Naive thymus-derived CD4-positive, alpha-beta T cell (primary cell): ENCODE measurements at regions of chr17 and their contacts with region 1.

Region 1: GRCh38 chr17:7561028-7561575 is 617 bp upstream of the SENP3 start:
- DNase-seq: peak; percentile 60 to 86 (median 71)
- ATAC-seq: peak; percentile 76
- H3K4me3 ChIP-seq: peak overlapping the region; percentile 96
- H3K4me3 Mint-ChIP-seq: peak overlapping the region; percentile 87 to 97 (median 93)
- H3K27ac ChIP-seq: peak overlapping the region; percentile 92
- H3K27ac Mint-ChIP-seq: peak overlapping the region; percentile 90 to 100 (median 96)
- H3K4me1 ChIP-seq: peaks cover 17 to 54% of the 10 kb centered on the region in 2 donors
- H3K4me1 Mint-ChIP-seq: peaks cover 33 to 55% (median 49%) of the 10 kb centered on the region in 7 donors
- H3K27me3 ChIP-seq: no peaks in the 10 kb centered on the region
- H3K27me3 Mint-ChIP-seq: peaks cover 0 to 2% (median 0%) of the 10 kb centered on the region in 5 donors

Region 2: DNA sequence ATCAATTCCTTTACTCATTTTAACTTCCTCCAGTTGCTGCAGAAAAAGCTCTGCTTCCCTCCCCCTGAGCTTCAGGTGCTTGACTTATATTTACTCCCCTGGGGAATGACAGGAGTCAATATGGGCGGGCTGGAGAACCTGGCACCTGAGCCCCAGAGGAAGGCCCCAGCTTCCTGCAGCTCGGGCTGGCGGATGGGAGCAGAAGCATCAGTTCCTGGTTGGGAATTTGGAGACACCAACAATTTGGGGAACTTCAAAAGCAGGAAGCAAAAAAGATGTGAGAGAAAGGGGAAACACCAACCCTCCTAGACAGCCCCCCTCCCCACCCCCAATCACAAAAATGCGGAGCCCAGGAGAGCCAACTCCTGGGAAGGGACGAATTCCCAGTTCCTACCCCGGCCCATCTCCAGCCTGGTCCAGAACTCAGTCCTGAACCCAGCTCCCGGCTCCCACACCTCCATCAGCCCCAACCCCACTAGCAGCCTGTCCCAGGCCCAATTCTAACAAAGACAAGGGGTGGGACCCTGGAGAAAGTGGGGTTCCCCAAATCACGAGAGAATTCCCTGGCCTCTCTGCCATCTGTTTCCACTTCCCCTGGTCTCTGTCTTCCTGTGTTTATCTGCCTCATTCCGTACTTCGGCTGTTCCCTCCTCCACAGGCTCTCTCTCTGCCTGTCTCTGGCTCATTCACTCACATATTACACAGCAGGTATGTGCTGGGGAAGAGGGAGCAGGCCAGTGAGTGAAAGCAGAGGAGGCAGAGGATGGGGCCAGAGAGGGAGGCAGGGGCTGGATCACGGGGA is 430.3 kb before region 1 on chr17:
- CTCF ChIA-PET with region 1: no interaction called
- POLR2A ChIA-PET with region 1: no interaction called
- intact Hi-C with region 1: no loop called
- DNase-seq: no peak
- ATAC-seq: no peak
- H3K4me3 ChIP-seq: no peak overlapping the region
- H3K4me3 Mint-ChIP-seq: peak overlapping the region in 6 of 10 donors; percentile 11 to 73 (median 30)
- H3K27ac ChIP-seq: peak overlapping the region; percentile 11
- H3K27ac Mint-ChIP-seq: peak overlapping the region; percentile 31 to 98 (median 90)
- H3K4me1 ChIP-seq: peaks cover 6 to 17% of the 10 kb centered on the region in 2 donors
- H3K4me1 Mint-ChIP-seq: peaks cover 18 to 33% (median 24%) of the 10 kb centered on the region in 7 donors
- H3K27me3 ChIP-seq: no peaks in the 10 kb centered on the region
- H3K27me3 Mint-ChIP-seq: peaks cover 0 to 5% (median 0%) of the 10 kb centered on the region in 5 donors

Region 3: DNA sequence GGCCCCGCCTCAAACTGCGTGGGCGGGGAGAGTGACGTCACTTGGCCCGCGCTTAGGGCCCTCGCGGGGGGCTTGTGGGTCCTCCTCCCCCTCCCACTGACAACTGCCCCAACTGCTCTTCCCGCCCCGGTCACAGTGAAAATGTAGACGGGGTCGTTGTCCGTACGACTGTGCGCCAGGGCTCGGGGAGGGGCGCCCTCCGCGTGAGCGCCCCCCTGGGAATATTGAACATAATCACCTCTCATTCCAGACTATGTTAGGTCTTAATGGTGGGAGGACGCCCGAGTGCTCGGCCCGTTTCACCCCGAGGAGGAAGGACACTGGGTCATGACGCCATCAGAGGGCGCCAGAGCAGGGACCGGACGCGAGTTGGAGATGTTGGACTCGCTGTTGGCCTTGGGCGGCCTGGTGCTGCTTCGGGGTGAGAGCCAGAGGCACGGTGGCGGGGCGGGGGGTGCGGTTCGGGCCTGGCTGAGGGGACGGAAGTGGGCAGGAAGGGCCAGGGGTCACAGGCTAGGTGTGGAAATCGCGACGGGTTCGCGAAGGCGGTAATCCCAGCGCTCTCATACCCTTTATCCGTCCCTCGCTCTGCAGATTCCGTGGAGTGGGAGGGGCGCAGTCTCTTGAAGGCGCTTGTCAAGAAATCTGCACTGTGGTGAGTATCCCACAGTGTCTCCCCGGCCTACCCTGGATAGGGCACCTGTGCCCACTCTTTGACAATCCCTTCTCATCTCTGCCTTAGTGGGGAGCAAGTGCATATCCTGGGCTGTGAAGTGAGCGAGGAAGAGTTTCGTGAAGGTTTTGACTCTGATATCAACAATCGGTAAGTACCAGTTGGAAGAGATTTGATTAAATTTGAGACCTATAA is 308.7 kb before region 1 on chr17 and contains the start of gene ELP5:
- CTCF ChIA-PET with region 1: no interaction called
- POLR2A ChIA-PET with region 1: no interaction called
- intact Hi-C with region 1: loop called (anchors 1 kb)
- DNase-seq: peak in 5 of 9 donors; percentile 73 to 90 (median 83)
- ATAC-seq: peak; percentile 69
- H3K4me3 ChIP-seq: peak within 1 kb of the TSS; percentile 91
- H3K4me3 Mint-ChIP-seq: peak within 1 kb of the TSS; percentile 85 to 98 (median 96)
- H3K27ac ChIP-seq: peak within 1 kb of the TSS; percentile 94
- H3K27ac Mint-ChIP-seq: peak within 1 kb of the TSS; percentile 95 to 100 (median 99)
- H3K4me1 ChIP-seq: peaks cover 22 to 32% of the 10 kb centered on the region in 2 donors
- H3K4me1 Mint-ChIP-seq: peaks cover 29 to 51% (median 42%) of the 10 kb centered on the region in 7 donors
- H3K27me3 ChIP-seq: no peaks in the 10 kb centered on the region
- H3K27me3 Mint-ChIP-seq: peaks cover 0 to 4% (median 0%) of the 10 kb centered on the region in 5 donors
- total RNA-seq, gene ELP5: 26.9 to 49.1 (median 32.9) TPM

Region 4: DNA sequence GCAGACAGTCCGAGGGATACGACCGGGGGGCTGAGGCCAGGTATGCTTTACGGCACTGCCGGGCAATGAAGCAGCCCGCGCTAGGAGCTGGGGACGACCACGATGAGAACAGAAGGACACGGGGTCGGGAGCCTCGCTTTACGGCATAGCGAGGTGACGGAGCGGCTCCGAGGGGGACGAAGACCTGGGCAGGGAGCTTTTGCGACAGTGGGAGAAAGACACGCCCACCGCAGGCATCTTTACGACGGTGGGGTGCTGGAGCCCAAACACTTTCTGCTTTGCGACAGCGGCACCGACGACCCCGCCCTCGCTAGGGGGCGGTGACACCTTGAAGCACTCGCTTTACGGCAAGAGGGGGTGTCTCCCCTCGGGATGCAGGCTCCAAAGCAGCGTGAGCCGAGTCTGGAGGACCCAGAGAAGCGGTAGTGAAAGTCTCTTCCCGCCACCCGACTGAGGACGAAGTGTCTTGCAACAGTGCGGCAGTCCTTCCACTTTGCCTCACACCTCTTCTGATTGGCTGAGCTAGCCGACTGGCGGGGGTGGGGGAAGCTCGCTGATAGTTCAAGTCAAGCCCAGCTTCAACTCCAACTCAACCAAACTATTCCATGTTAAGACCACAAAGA is 231.6 kb before region 1 on chr17:
- CTCF ChIA-PET with region 1: no interaction called
- POLR2A ChIA-PET with region 1: no interaction called
- intact Hi-C with region 1: loop called in 1 of 2 experiments (anchors 1 kb)
- DNase-seq: peak; percentile 84 to 98 (median 98)
- ATAC-seq: peak; percentile 91
- H3K4me3 ChIP-seq: peak overlapping the region; percentile 95
- H3K4me3 Mint-ChIP-seq: peak overlapping the region; percentile 89 to 100 (median 96)
- H3K27ac ChIP-seq: peak overlapping the region; percentile 88
- H3K27ac Mint-ChIP-seq: peak overlapping the region; percentile 93 to 99 (median 97)
- H3K4me1 ChIP-seq: peaks cover 15 to 36% of the 10 kb centered on the region in 2 donors
- H3K4me1 Mint-ChIP-seq: peaks cover 29 to 61% (median 44%) of the 10 kb centered on the region in 7 donors
- H3K27me3 ChIP-seq: no peaks in the 10 kb centered on the region
- H3K27me3 Mint-ChIP-seq: no peaks in the 10 kb centered on the region

Region 5: GRCh38 chr17:7403977-7404736 is 156.9 kb before region 1 on chr17 and contains the start of gene TMEM256:
- CTCF ChIA-PET with region 1: interaction called, 3 read pairs
- POLR2A ChIA-PET with region 1: interaction called, 3 read pairs
- intact Hi-C with region 1: loop called in 1 of 2 experiments (anchors 1 kb)
- DNase-seq: peak; percentile 79 to 96 (median 91)
- ATAC-seq: peak; percentile 93
- H3K4me3 ChIP-seq: peak within 1 kb of the TSS; percentile 95
- H3K4me3 Mint-ChIP-seq: peak within 1 kb of the TSS; percentile 87 to 98 (median 96)
- H3K27ac ChIP-seq: peak within 1 kb of the TSS; percentile 78
- H3K27ac Mint-ChIP-seq: peak within 1 kb of the TSS; percentile 91 to 100 (median 96)
- H3K4me1 ChIP-seq: peaks cover 9 to 10% of the 10 kb centered on the region in 2 donors
- H3K4me1 Mint-ChIP-seq: peaks cover 8 to 25% (median 21%) of the 10 kb centered on the region in 7 donors
- H3K27me3 ChIP-seq: no peaks in the 10 kb centered on the region
- H3K27me3 Mint-ChIP-seq: peaks cover 0 to 23% (median 0%) of the 10 kb centered on the region in 5 donors
- total RNA-seq, gene TMEM256: 31.5 to 58.5 (median 48.2) TPM

Region 6: GRCh38 chr17:7515911-7516610 is 45.0 kb before region 1 on chr17:
- CTCF ChIA-PET with region 1: interaction called, 86 read pairs
- POLR2A ChIA-PET with region 1: interaction called, 45 read pairs
- intact Hi-C with region 1: loop called (anchors 1 kb)
- DNase-seq: no peak
- ATAC-seq: no peak
- H3K4me3 ChIP-seq: no peak overlapping the region
- H3K4me3 Mint-ChIP-seq: no peak overlapping the region
- H3K27ac ChIP-seq: no peak overlapping the region
- H3K27ac Mint-ChIP-seq: peak overlapping the region in 3 of 9 donors; percentile 12 to 74 (median 45)
- H3K4me1 ChIP-seq: no peaks in the 10 kb centered on the region
- H3K4me1 Mint-ChIP-seq: peaks cover 0 to 7% (median 0%) of the 10 kb centered on the region in 7 donors
- H3K27me3 ChIP-seq: no peaks in the 10 kb centered on the region
- H3K27me3 Mint-ChIP-seq: no peaks in the 10 kb centered on the region

Region 7: GRCh38 chr17:7583253-7584109 is 22.4 kb after region 1 on chr17 and contains the start of gene MPDU1:
- CTCF ChIA-PET with region 1: interaction called, 18 read pairs
- POLR2A ChIA-PET with region 1: interaction called, 19 read pairs
- intact Hi-C with region 1: loop called (anchors 1 kb)
- DNase-seq: peak; percentile 89 to 98 (median 97)
- ATAC-seq: peak; percentile 80
- H3K4me3 ChIP-seq: peak within 1 kb of the TSS; percentile 100
- H3K4me3 Mint-ChIP-seq: peak within 1 kb of the TSS; percentile 89 to 100 (median 99)
- H3K27ac ChIP-seq: peak within 1 kb of the TSS; percentile 95
- H3K27ac Mint-ChIP-seq: peak within 1 kb of the TSS; percentile 98 to 100 (median 100)
- H3K4me1 ChIP-seq: peaks cover 28 to 35% of the 10 kb centered on the region in 2 donors
- H3K4me1 Mint-ChIP-seq: peaks cover 33 to 60% (median 55%) of the 10 kb centered on the region in 7 donors
- H3K27me3 ChIP-seq: no peaks in the 10 kb centered on the region
- H3K27me3 Mint-ChIP-seq: no peaks in the 10 kb centered on the region
- total RNA-seq, gene MPDU1: 25.4 to 79.8 (median 31.4) TPM

Region 8: DNA sequence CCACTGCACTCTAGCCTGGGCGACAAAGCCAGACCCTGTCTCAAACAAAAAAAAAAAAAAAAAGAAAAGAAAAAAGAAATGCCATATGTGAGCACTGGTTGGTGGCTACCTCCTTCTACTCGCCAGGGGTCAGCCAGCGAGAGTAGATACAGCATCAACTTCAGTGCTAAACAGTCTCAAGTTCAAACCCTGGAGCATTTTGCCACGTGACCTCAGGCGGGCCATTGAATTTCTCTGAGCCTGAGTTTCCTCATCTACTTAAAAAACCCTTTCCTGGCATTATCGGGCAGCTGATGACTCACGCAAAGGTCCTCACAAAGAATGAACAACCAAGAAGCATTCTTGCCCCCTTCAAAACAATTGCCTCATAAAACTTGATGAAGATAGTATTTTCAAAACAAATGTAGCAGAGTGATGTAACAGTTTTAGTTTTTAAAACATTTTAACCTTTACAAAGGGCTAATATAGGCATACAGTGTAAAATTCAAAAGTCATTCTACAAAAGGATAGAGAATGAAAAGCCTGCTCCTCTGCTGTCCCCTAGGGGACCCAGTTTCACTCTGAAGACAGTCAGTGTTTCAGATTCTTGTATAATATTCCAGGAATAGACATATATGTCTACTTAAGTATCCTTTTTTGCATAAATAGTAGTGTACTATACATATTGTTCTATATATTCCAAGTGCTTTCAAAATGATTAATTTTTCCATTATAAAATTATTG is 184.8 kb after region 1 on chr17:
- CTCF ChIA-PET with region 1: no interaction called
- POLR2A ChIA-PET with region 1: no interaction called
- intact Hi-C with region 1: no loop called
- DNase-seq: no peak
- ATAC-seq: no peak
- H3K4me3 ChIP-seq: no peak overlapping the region
- H3K4me3 Mint-ChIP-seq: no peak overlapping the region
- H3K27ac ChIP-seq: no peak overlapping the region
- H3K27ac Mint-ChIP-seq: no peak overlapping the region
- H3K4me1 ChIP-seq: no peaks in the 10 kb centered on the region
- H3K4me1 Mint-ChIP-seq: peaks cover 0 to 2% (median 0%) of the 10 kb centered on the region in 7 donors
- H3K27me3 ChIP-seq: no peaks in the 10 kb centered on the region
- H3K27me3 Mint-ChIP-seq: peaks cover 2 to 18% (median 10%) of the 10 kb centered on the region in 5 donors